ENCODE measurements at regions of chr11 and their contacts with region 1.

Region 1: GRCh38 chr11:18634140-18635032 is at the start of gene SPTY2D1:
- DNase-seq: peak; percentile 96
- H3K4me3 ChIP-seq: peak within 1 kb of the TSS; percentile 91
- CTCF ChIP-seq: no peak

Region 2: DNA sequence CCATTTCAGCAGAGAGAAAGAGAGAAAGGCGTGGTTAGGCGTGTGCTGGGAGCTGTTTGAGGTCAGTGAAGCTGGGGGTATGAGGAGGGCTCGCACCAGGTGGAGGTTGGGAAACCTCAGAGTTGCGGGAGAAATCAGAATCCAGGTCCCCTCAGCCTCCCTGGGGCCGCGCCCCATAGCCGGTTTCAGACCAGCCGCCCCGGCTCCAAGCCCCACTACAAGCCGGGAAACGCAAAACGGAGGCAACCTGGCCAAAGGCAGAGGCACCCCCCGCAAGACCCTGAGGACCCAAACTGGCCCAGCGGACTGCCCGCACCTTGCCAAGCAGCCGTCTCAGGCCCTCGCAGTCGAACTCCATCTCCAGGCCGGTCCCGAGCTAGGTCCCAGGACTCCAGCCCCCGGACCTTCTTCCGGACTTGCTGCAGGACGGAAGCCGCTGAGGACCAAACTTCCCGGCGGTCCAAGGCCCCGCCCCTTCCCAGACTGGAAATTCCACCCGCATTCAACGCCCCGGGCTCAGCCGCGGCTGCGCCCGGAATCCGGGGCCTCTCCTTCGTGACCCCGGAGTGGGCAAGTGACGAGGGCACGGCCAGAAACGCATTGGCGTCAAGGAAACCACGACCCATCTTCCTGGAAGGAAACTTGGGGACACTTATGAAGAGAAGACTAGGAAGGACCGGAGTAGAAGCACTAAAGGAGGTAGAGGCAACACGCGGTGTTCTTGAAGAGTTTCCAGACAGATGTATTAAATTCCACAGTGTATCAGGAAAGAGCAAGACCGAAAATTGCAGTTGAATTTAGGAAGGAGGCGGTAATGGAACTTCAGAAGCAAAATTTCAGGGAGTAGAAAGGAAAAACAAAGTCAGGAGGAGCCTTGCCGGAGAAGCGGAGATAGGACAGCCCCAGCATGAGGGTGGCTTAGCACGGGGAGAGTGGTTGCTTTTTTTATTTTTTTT is 45.8 kb before region 1 on chr11 and contains the start of gene UEVLD:
- CTCF ChIA-PET with region 1: no interaction called
- POLR2A ChIA-PET with region 1: interaction called, 17 read pairs
- DNase-seq: peak; percentile 50
- H3K4me3 ChIP-seq: peak within 1 kb of the TSS; percentile 95
- CTCF ChIP-seq: no peak

Region 3: GRCh38 chr11:18617688-18618341 is 16.6 kb before region 1 on chr11:
- CTCF ChIA-PET with region 1: interaction called, 8 read pairs
- POLR2A ChIA-PET with region 1: interaction called, 17 read pairs
- DNase-seq: no peak
- H3K4me3 ChIP-seq: no peak overlapping the region
- CTCF ChIP-seq: no peak